ENCODE measurements at regions of chr10 and their contacts with region 1.

Region 1: GRCh38 chr10:118754720-118755480 is at the start of gene CACUL1:
- DNase-seq: peak; percentile 100
- H3K4me3 Mint-ChIP-seq: peak within 1 kb of the TSS; percentile 96
- H3K27ac Mint-ChIP-seq: peak within 1 kb of the TSS; percentile 88
- H3K4me1 Mint-ChIP-seq: peaks cover 29% of the 10 kb centered on the region
- H3K27me3 Mint-ChIP-seq: peaks cover 13% of the 10 kb centered on the region
- total RNA-seq, gene CACUL1: 27.6 and 29.4 TPM in 2 replicates

Region 2: DNA sequence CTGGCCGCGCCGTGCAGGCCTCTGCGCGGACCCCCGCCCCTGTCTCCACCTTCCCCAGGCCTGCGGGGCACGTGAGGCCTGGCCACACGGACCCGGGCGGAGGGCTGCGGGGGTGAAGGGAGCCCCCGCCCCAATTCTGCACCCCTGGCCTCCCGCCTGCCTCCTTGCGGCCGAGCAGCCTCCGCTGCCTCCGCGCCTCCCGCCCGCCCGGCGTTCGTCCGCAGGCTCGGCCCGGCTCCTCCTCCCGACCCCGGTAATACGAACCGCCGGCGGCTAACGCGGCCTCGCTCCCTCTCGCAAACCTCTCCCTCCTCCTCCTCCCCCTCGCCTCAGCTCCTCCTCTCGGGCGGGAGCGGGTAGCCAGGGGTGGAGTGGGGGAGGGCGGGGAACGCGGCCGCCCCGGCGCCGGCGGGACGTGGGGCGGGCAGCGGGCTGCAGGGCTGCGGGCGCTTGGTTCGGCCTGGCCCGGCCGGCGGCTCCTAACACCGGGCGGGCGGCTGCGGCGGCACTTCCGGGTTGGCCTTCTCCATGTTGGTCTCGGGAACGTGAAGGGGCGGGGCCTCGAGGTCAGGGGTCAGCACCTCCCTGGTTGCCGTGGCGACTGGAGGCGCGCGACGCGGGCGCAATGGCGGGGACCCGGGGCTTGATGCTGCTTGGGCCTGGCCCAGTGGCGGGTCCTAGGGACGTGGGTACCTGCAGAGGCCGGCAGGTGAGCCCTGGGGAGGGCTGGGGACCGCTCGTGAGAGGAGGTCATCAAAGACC is 708.3 kb before region 1 on chr10 and contains the start of gene RAB11FIP2:
- intact Hi-C with region 1: loop called (anchors 5 kb)
- DNase-seq: peak; percentile 99
- H3K4me3 Mint-ChIP-seq: peak within 1 kb of the TSS; percentile 91
- H3K27ac Mint-ChIP-seq: peak within 1 kb of the TSS; percentile 85
- H3K4me1 Mint-ChIP-seq: peaks cover 21% of the 10 kb centered on the region
- H3K27me3 Mint-ChIP-seq: peaks cover 15% of the 10 kb centered on the region
- total RNA-seq, gene RAB11FIP2: 12.3 and 14.5 TPM in 2 replicates

Region 3: DNA sequence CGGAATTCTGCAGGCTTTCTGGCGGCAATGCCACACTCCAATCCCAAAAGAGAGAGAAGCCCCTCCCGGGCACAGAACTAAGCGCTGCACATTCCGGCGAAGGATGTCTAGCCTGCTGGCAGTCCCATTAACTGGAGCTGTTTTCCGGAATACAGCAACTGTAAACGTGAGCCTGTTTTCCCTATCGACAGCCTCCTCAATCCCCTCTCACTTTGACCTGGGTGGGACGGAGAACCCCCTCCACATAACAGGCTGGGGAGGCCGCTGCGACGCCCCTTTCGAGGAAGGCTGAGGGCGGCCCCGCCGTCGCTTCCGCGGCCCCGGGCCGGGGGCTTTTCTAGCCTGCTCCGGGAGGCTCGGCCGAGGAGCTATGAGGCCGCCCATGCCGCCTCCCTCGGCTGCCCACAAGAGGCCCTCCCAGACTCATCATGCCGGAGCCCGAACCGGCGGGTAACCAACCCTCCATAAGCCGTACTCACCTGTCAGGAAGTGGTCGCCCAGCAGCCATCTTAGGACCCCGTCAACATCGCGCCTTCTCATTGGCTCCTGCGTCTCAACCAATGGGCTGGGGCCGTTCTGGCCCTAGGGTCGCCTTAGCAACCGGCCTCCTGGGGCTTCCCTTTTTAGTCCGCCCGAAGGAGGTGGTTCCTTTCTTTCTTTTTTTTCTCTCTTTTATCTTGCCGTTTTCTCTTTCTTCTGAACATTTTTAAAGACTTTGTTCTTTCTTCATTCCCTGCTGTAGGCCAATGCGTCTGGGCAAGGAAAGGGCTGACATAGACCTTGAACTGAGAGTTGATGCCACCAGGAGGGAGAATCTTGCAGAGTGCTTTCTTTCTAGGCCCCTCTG is 412.9 kb before region 1 on chr10 and contains the start of gene FAM204A:
- intact Hi-C with region 1: loop called (anchors 1 kb)
- DNase-seq: peak; percentile 99
- H3K4me3 Mint-ChIP-seq: peak within 1 kb of the TSS; percentile 89
- H3K27ac Mint-ChIP-seq: peak within 1 kb of the TSS; percentile 92
- H3K4me1 Mint-ChIP-seq: peaks cover 28% of the 10 kb centered on the region
- H3K27me3 Mint-ChIP-seq: peaks cover 9% of the 10 kb centered on the region
- total RNA-seq, gene FAM204A: 57.2 and 60.0 TPM in 2 replicates

Region 4: DNA sequence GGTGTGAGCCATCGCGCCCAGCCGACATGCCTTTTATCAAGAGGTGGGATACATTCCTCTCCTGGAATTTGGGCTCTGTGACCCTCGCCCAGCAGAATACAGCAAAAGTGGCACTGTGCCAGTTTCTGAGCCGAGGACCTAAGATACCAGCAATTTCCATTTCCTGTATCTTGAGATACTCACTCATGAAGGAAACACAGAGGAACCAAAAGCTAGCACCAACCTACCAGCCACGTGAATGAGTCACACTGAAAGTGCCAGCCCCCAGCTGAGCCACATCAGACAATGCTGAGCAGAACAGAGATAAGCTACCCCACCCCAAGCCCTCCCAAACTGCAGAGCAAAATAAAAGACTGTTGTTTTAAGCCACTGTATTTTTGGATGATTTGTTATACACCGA is 56.5 kb before region 1 on chr10:
- intact Hi-C with region 1: loop called (anchors 1 kb)
- DNase-seq: peak; percentile 92
- H3K4me3 Mint-ChIP-seq: peak overlapping the region; percentile 60
- H3K27ac Mint-ChIP-seq: peak overlapping the region; percentile 15
- H3K4me1 Mint-ChIP-seq: peaks cover 30% of the 10 kb centered on the region
- H3K27me3 Mint-ChIP-seq: no peaks in the 10 kb centered on the region

Region 5: DNA sequence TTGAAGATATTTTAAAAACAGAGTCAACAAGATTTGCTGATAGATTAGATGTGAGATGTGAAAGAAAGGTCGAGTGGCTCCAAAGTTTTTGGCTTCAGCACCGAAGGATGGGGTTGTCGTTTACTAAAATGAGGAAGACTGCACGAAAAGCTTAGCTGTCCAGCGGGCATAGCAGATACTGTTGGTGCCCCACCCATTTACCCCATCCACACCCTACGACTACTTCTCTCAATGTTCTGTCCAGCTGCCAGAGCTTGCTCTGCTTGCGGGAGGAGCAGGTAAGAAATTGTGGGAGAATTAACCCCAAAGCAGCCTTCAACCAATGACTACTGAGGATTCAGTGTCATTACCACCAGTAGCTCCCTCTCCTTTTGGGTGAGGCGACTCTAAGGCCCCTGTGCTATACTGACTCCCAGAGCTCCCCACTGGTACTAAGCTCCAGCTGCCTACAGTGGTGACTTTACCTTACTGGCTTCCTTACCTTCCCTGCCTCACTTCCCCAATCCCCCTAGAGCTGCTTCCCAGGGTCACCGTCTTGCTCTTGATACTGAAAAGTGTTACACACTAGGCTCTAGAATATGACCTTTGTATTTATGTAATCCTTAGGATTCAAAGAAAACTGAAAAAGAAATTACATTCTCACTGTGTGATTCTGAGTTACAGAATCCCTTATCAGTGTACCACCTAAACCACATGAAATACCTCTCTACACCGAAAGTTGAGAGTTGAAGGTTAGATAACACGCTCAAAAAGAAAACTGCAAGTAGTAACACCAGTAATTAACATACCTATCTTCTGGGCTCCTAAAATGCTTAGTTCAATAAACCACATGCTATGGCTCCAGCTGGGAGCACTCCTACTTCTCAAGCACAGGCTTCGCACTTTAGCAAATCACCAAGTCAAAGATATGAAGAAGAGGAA is 22.4 kb before region 1 on chr10:
- intact Hi-C with region 1: loop called (anchors 1 kb)
- DNase-seq: peak; percentile 71
- H3K4me3 Mint-ChIP-seq: peak overlapping the region; percentile 24
- H3K27ac Mint-ChIP-seq: no peak overlapping the region
- H3K4me1 Mint-ChIP-seq: peaks cover 53% of the 10 kb centered on the region
- H3K27me3 Mint-ChIP-seq: no peaks in the 10 kb centered on the region

Region 6: DNA sequence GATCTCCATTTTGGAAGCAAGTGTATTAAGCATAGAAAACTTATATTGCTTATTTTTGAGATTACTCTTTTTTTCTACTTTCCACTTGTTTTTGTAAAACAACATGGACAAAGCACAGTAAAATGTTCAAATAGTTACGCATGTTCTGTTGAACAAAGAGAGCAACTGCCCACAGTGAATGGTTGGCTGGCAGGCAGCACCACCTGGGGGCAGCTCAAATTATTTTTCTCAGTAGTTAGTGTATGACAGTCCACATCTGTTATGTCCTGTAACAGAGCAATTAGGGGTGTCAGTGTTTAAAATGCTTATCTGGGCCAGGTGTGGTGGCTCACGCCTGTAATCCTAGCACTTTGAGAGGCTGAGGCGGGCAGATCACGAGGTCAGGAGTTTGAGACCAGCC is 46.0 kb after region 1 on chr10:
- intact Hi-C with region 1: no loop called
- DNase-seq: no peak
- H3K4me3 Mint-ChIP-seq: no peak overlapping the region
- H3K27ac Mint-ChIP-seq: no peak overlapping the region
- H3K4me1 Mint-ChIP-seq: no peaks in the 10 kb centered on the region
- H3K27me3 Mint-ChIP-seq: peaks cover 16% of the 10 kb centered on the region

Region 7: GRCh38 chr10:118840071-118840775 is 85.3 kb after region 1 on chr10:
- intact Hi-C with region 1: loop called (anchors 2 kb)
- DNase-seq: peak; percentile 73
- H3K4me3 Mint-ChIP-seq: peak overlapping the region; percentile 26
- H3K27ac Mint-ChIP-seq: peak overlapping the region; percentile 54
- H3K4me1 Mint-ChIP-seq: peaks cover 12% of the 10 kb centered on the region
- H3K27me3 Mint-ChIP-seq: no peaks in the 10 kb centered on the region

Region 8: GRCh38 chr10:119517235-119518141 is 762.6 kb after region 1 on chr10:
- intact Hi-C with region 1: no loop called
- DNase-seq: peak; percentile 87
- H3K4me3 Mint-ChIP-seq: peak overlapping the region; percentile 75
- H3K27ac Mint-ChIP-seq: peak overlapping the region; percentile 90
- H3K4me1 Mint-ChIP-seq: peaks cover 48% of the 10 kb centered on the region
- H3K27me3 Mint-ChIP-seq: no peaks in the 10 kb centered on the region